H1 (cell line): ENCODE measurements at regions of chr3 and their contacts with region 1.

Region 1: GRCh38 chr3:126378341-126378751 is 16.4 kb upstream of the CFAP100 start:
- DNase-seq: no peak
- H3K4me3 ChIP-seq: no peak overlapping the region
- H3K27ac ChIP-seq: no peak overlapping the region
- H3K4me1 ChIP-seq: peaks cover 0 to 7% (median 3%) of the 10 kb centered on the region in 4 experiments; a peak in 4 of 7 replicates
- H3K27me3 ChIP-seq: no peaks in the 10 kb centered on the region
- CTCF ChIP-seq: no peak
- EP300 ChIP-seq: no peak
- POLR2A ChIP-seq: no peak
- RAD21 ChIP-seq: no peak

Region 2: DNA sequence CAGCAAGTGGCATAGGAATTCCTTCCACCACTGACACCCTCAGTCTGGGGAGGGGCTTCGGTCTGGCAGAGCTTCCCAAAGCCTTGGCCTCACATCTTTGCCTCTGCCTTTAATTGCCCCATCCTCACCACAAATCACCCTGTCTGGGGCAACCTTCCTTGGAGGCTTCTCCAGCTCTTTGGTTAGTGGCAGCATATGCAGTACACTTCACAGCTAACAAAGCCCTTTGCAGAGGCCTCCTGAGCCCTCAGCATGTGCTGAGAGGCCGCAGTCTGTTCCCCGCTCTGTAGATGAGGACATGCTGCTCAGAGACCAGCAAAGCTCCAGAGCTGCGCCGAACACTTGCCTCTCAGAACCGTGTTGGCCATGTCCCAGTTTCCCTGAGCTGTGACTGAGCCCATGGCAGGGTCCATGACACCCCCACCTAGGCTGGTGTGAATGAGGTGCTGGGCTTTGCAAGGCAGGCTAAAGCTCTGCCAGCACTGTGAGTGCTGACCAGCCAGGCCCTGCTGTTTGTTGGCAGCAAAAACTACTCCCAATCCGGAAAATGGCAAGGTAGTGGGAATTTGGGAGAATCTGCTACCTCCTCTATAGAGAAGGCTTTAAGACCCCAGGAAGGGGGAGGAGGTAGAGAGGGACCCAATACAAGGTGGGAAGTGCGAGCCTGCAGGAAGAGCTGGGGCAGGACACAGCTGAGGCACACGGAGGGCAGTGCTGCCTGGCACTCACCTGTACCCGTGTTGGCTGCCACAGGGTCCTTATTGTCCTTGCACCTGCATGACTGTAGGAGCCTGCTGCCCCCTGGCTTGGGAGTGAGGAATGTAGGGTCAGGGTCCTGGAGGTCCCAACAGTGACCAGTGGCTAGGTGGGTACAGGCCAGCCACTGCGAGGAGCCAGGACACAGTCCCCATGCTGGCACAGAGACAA is 12.7 kb before region 1 on chr3:
- CTCF ChIA-PET with region 1: interaction called, 14 read pairs
- POLR2A ChIA-PET with region 1: no interaction called
- DNase-seq: no peak
- H3K4me3 ChIP-seq: no peak overlapping the region
- H3K27ac ChIP-seq: no peak overlapping the region
- H3K4me1 ChIP-seq: peaks cover 0 to 17% (median 8%) of the 10 kb centered on the region in 4 experiments
- H3K27me3 ChIP-seq: no peaks in the 10 kb centered on the region
- CTCF ChIP-seq: peak in 2 of 3 experiments; percentile 32 to 60; a peak in 3 of 4 replicates
- EP300 ChIP-seq: no peak
- POLR2A ChIP-seq: no peak
- RAD21 ChIP-seq: peak; percentile 63 to 72

Region 3: DNA sequence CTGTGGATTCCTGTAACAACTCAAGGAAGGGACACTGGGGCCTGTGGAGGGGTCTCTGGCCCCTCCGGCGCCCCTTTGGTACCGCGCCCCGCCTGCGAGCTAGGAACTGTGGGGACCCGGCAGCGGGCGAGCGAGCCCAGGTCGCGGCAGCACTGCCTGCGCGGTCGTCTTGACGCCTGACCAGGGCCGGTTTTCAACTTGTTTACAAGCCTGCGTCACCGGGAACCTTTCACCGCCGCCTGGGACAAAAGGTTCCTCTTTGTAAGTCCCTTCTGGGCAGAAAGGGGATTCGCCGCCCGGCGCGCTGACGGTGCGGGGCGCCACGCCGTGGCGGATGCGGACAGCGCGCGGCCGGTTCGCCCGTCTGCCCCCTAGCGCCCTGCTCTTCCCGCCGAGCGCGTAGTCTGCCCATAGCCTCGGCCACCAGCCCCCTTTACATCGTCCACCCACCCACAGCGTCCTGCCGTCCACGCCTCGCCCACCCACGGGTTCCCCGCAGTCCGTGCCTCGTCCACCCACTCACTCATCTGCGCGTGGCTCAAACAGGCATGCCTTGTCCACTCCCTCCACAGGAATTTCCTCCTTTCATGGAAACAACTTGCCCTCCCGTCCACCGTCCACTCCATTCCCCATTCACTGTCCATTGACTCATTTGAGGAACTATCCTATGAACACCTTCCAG is 10.9 kb after region 1 on chr3:
- CTCF ChIA-PET with region 1: interaction called, 16 read pairs
- POLR2A ChIA-PET with region 1: interaction called, 3 read pairs
- DNase-seq: peak; percentile 79 to 86
- H3K4me3 ChIP-seq: peak overlapping the region in 2 of 4 experiments; percentile 7 to 53; a peak in 4 of 8 replicates
- H3K27ac ChIP-seq: no peak overlapping the region; the same call in 1 of the 2 replicates
- H3K4me1 ChIP-seq: peaks cover 0 to 8% (median 3%) of the 10 kb centered on the region in 4 experiments; a peak in 4 of 7 replicates
- H3K27me3 ChIP-seq: peaks cover 8 to 18% (median 17%) of the 10 kb centered on the region in 4 experiments
- CTCF ChIP-seq: peak in 2 of 3 experiments; percentile 92 to 100; a peak in 3 of 4 replicates
- EP300 ChIP-seq: peak in 1 of 2 experiments; percentile 28; a peak in 1 of 3 replicates
- POLR2A ChIP-seq: peak in 1 of 2 experiments; percentile 39; a peak in 1 of 3 replicates
- RAD21 ChIP-seq: peak; percentile 89 to 91